PC-9 (cell line): ENCODE measurements at regions of chr3 and their contacts with region 1.

Region 1: GRCh38 chr3:39288300-39288808 is 8.5 kb upstream of the CX3CR1 start:
- DNase-seq: peak; percentile 74 to 82
- H3K4me3 ChIP-seq: no peak overlapping the region
- H3K27ac ChIP-seq: no peak overlapping the region
- H3K4me1 ChIP-seq: peaks cover 4% of the 10 kb centered on the region; the same call in 1 of the 2 replicates
- H3K27me3 ChIP-seq: no peaks in the 10 kb centered on the region
- CTCF ChIP-seq: peak; percentile 88

Region 2: GRCh38 chr3:38521391-38521987 is 766.9 kb before region 1 on chr3:
- CTCF ChIA-PET with region 1: no interaction called
- POLR2A ChIA-PET with region 1: no interaction called
- intact Hi-C with region 1: loop called (anchors 5 kb)
- DNase-seq: peak; percentile 46 to 61
- H3K4me3 ChIP-seq: no peak overlapping the region
- H3K27ac ChIP-seq: no peak overlapping the region
- H3K4me1 ChIP-seq: no peaks in the 10 kb centered on the region
- H3K27me3 ChIP-seq: no peaks in the 10 kb centered on the region
- CTCF ChIP-seq: peak; percentile 91

Region 3: DNA sequence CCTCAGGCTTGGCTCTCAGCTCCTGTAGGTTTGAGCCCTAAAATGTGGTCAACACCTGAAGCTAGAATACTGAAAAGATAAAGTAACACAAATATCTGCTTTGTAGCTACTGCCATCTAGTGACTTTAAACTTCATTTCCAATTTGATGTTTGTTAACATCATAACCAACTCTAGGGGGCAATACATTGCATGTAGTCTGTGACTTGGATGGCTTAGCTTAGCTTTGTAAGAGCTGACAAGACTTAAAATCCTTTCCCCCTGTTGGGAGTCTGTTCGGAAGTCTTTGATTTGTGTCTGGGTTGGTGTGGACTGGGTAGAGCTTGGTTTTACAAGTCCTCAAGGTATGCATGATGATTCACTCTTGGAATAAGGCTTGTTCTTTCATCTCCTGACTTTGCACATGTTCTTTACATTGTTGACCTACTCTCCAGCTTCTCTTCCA is 288.3 kb before region 1 on chr3:
- CTCF ChIA-PET with region 1: interaction called, 5 read pairs
- POLR2A ChIA-PET with region 1: no interaction called
- intact Hi-C with region 1: loop called (anchors 1 kb)
- DNase-seq: peak in 1 of 2 experiments; percentile 68
- H3K4me3 ChIP-seq: no peak overlapping the region
- H3K27ac ChIP-seq: no peak overlapping the region
- H3K4me1 ChIP-seq: no peaks in the 10 kb centered on the region
- H3K27me3 ChIP-seq: peaks cover 29% of the 10 kb centered on the region
- CTCF ChIP-seq: peak; percentile 69

Region 4: DNA sequence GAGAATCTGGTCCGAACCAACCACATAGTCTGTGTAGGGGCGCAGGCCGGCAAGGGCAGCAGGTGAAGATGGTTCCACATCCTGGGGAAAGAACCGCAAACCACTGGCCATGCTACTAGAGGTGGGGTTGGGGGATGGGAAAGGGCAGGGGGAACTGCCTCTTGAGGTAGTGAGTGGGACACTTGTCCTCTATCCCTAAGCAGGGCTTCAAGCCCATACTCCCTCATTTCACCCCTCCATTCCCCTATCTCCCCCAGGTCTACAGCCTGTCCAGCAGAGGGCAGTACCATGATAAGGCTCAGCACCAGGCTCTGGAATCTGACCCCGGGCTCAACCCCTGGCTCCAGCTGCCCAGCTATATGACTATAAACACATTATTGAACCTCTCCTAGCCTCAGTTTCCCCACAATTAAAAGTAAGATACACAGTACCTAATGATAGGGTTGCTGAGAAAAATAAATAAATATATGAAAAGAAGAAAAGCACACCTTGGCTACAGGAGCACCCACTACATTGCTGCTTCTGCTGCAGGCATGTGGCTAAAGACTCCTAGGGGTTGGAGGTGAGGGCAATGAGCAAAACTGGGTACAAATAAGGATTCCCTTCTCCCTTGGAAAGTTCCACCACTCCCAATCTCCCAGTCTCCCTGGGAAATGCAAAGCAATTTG is 187.2 kb before region 1 on chr3:
- CTCF ChIA-PET with region 1: interaction called, 5 read pairs
- POLR2A ChIA-PET with region 1: no interaction called
- intact Hi-C with region 1: loop called (anchors 1 kb)
- DNase-seq: peak in 1 of 2 experiments; percentile 31
- H3K4me3 ChIP-seq: no peak overlapping the region
- H3K27ac ChIP-seq: no peak overlapping the region
- H3K4me1 ChIP-seq: peaks cover 12% of the 10 kb centered on the region
- H3K27me3 ChIP-seq: no peaks in the 10 kb centered on the region
- CTCF ChIP-seq: peak; percentile 77

Region 5: DNA sequence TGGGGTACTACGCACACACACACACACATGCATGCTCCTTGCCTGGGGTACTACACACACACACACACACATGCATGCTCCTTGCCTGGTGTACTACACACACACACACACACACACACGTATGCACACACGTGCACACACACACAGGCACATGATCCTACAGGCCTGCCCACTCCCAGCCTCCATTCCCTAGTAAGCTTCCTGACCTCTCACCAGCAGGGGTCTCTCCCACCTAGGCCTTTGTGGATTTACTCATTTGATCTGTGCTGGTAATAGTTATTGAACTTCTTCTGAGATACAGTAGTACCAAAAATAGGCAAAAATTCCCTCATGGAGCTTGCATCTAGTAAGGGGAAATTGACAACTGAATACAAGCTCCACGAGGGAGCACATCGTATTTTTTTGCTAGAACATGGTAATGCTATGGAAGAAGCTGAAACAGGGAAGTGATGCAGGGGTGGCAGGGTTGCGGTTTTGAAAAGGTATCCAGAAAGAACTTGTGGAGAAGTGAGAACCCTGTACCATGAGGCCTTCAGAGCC is 161.8 kb before region 1 on chr3:
- CTCF ChIA-PET with region 1: interaction called, 30 read pairs
- POLR2A ChIA-PET with region 1: interaction called, 14 read pairs
- intact Hi-C with region 1: loop called (anchors 1 kb)
- DNase-seq: peak in 1 of 2 experiments; percentile 29
- H3K4me3 ChIP-seq: no peak overlapping the region
- H3K27ac ChIP-seq: peak overlapping the region; percentile 68
- H3K4me1 ChIP-seq: peaks cover 41% of the 10 kb centered on the region
- H3K27me3 ChIP-seq: no peaks in the 10 kb centered on the region
- CTCF ChIP-seq: peak; percentile 53